Right cardiac atrium (tissue), 5 donors: ENCODE measurements at regions of chr20 and their contacts with region 1.

Region 1: DNA sequence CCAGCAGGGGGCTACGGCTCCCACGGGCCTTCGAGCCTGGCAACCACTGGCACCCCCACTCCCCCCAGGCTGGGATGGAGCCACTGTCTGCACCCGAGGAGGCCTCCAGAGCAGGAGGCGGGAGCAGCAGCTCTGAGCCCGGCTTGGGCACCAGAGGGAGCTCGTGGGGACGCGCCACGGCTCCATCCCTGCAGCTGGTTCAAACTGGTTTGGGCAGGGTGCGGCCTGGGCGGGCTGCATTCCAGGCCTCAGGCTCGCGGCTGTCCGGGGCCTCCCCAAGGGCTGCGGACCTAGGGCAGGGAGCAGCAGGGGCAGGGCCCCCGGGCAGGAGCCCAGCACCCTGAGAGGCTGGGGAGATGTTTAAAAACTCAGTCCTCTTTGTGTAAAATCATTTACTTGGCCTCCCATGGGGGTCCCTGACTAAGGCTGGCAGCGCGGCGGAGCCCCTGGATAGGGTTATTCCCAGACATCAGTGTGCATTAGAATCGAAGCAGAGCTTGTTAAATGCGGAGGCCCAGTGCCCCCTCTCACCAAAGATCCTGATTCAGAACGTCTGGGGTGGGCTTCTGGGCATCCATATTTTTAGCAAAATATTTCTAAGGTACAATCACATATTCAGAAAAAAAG is 4.1 kb upstream of the BCAS4 start:
- DNase-seq: peak; percentile 89 to 96 (median 96)
- ATAC-seq: peak; percentile 91 to 93
- H3K4me3 ChIP-seq: no peak overlapping the region
- H3K27ac ChIP-seq: peak overlapping the region; percentile 7
- H3K4me1 ChIP-seq: no peaks in the 10 kb centered on the region
- H3K27me3 ChIP-seq: no peaks in the 10 kb centered on the region

Region 2: DNA sequence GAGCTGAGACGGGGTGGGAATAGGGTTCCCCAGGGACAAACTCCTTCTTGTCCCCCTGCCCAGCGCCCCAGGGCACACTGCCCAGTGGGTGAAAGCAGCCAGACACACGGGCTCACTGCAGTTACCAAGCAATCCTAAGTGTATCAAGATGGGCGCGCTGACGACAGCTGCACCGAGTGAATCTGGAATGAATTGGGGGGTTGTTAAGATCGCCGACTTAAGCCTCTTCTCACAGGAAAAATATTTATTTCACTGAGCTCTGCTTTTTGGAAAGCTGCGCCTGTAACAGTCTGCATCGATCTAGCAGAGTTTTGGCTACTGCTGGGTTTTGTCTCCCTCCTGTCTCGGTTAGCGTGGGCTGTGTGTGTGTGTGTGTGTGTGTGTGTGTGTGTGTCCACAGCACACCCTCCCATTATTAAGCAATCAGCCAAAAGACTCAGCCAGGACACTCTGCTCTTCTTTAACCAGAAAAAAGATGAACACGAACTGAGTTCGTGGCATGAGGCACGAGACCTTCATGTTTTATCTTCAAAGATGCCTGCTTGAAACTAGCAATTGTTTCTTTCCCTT is 135.4 kb before region 1 on chr20:
- intact Hi-C with region 1: no loop called
- DNase-seq: peak; percentile 71 to 89 (median 86)
- ATAC-seq: peak; percentile 83 to 88
- H3K4me3 ChIP-seq: no peak overlapping the region
- H3K27ac ChIP-seq: peak overlapping the region; percentile 74
- H3K4me1 ChIP-seq: peaks cover 18% of the 10 kb centered on the region
- H3K27me3 ChIP-seq: no peaks in the 10 kb centered on the region

Region 3: DNA sequence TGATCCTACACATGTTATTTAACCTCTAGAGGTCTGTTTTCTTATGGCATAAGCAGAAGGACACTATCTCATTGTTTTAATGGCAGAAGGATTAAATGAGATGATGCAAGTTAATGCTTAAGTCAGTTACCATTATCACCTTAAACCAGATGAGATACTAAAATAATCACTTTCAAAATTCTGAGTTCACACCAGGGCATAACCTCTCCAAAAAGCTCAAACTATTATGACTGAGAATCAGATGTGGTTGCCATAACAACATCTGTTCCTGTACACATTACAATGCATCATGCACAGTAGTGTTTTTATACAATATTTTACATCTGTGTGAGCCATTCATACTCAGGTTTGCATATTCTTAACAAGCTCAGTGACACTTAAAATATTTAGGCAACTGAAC is 130.2 kb after region 1 on chr20:
- intact Hi-C with region 1: loop called in 2 of 4 experiments (anchors 5 to 10 kb)
- DNase-seq: no peak
- ATAC-seq: no peak
- H3K4me3 ChIP-seq: no peak overlapping the region
- H3K27ac ChIP-seq: no peak overlapping the region
- H3K4me1 ChIP-seq: peaks cover 8% of the 10 kb centered on the region
- H3K27me3 ChIP-seq: no peaks in the 10 kb centered on the region

Region 4: DNA sequence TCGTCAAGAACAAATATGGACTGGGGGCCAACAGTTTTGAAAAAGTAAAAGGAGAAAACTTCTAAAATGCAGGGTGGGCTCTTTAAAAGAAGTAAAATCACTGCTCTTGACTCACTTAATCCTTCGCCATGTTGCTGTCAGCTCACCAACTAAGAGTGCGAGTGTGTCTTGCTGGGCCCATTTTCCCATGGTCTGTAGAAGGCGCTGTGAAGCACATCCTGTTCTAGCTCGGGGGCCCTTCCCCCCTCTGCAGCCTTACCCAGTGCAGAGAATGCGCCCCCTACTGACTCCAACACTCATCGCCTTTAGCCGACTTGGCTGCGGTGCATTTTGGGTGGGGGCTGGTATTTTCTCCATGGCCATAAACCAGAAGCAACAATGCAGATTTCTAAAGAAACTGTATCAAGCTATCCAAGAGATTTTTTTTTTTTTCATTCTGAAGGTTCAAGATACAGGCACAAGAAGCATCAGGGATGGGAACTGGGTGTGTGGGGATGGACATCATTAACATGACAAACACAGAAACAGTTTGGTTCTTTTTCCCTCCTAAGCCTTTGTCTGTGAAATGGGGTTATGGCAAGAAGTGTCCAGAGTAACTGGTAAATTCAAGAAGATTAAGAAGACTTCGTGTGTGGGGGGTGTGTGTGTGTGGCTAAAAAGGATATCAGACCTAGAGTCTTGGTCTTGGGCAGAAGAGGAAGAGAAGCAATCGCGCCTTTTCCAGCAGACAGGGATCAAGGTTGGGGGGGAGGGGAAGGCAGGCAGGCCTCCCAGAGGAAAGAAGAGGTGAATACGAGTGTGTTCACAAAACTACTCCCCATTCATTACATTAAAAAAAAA is 138.8 kb after region 1 on chr20:
- intact Hi-C with region 1: loop called in 3 of 4 experiments (anchors 5 to 10 kb)
- DNase-seq: peak; percentile 88 to 93 (median 90)
- ATAC-seq: peak; percentile 57 to 71
- H3K4me3 ChIP-seq: peak overlapping the region; percentile 99
- H3K27ac ChIP-seq: peak overlapping the region; percentile 72
- H3K4me1 ChIP-seq: peaks cover 7% of the 10 kb centered on the region
- H3K27me3 ChIP-seq: no peaks in the 10 kb centered on the region

Region 5: DNA sequence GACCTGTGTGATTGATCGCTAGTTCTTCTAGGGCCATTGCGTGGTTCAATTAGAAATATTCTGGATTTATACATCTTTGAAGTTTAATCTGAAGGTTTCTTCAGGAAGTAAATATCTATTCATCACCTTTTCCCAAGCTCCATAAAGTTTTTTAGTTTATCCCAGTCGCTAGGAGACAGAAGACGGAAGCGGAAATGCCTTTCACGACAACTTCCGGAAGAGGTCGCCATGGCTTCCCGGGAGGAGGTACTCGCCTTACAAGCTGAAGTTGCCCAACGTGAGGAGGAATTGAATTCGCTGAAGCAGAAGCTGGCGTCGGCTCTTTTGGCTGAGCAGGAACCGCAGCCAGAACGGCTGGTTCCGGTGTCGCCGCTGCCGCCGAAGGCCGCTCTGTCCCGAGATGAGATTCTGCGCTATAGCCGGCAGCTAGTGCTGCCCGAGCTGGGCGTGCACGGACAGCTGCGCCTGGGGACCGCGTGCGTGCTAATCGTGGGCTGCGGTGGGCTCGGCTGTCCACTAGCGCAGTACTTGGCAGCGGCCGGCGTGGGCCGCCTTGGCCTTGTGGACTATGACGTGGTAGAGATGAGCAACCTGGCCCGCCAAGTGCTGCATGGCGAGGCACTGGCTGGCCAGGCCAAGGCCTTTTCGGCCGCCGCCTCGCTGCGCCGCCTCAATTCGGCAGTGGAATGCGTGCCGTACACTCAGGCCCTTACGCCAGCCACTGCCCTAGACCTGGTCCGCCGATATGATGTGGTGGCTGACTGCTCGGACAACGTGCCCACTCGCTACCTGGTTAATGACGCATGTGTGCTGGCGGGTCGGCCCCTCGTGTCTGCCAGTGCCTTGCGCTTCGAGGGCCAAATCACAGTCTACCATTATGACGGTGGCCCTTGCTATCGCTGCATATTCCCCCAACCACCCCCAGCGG is 168.1 kb after region 1 on chr20 and contains the start of gene MOCS3:
- intact Hi-C with region 1: loop called in 1 of 4 experiments (anchors 10 kb)
- DNase-seq: peak; percentile 84 to 90 (median 88)
- ATAC-seq: peak; percentile 85 to 86
- H3K4me3 ChIP-seq: peak within 1 kb of the TSS; percentile 63
- H3K27ac ChIP-seq: peak within 1 kb of the TSS; percentile 97
- H3K4me1 ChIP-seq: peaks cover 12% of the 10 kb centered on the region
- H3K27me3 ChIP-seq: no peaks in the 10 kb centered on the region
- total RNA-seq, gene MOCS3: 2.5 to 3.1 (median 2.9) TPM

Region 6: GRCh38 chr20:51306503-51307358 is 516.0 kb after region 1 on chr20:
- intact Hi-C with region 1: loop called in 1 of 4 experiments (anchors 10 kb)
- DNase-seq: peak; percentile 69 to 90 (median 89)
- ATAC-seq: peak; percentile 89 to 94
- H3K4me3 ChIP-seq: no peak overlapping the region
- H3K27ac ChIP-seq: no peak overlapping the region
- H3K4me1 ChIP-seq: no peaks in the 10 kb centered on the region
- H3K27me3 ChIP-seq: no peaks in the 10 kb centered on the region